ENCODE measurements at regions of chr19 and their contacts with region 1.

Region 1: GRCh38 chr19:54115109-54116063 is at the starts of genes PRPF31 and TFPT:
- DNase-seq: peak; percentile 98
- H3K4me3 Mint-ChIP-seq: peak within 1 kb of the TSS; percentile 85
- H3K27ac Mint-ChIP-seq: peak within 1 kb of the TSS; percentile 96
- H3K4me1 Mint-ChIP-seq: peaks cover 27% of the 10 kb centered on the region
- H3K27me3 Mint-ChIP-seq: no peaks in the 10 kb centered on the region
- total RNA-seq, gene PRPF31: 74.4 to 74.6 TPM
- total RNA-seq, gene TFPT: 27.1 to 31.6 TPM

Region 2: GRCh38 chr19:52189735-52190486 is 1925.5 kb before region 1 on chr19 and contains the start of gene PPP2R1A:
- CTCF ChIA-PET with region 1: no interaction called
- POLR2A ChIA-PET with region 1: no interaction called
- intact Hi-C with region 1: loop called (anchors 5 kb)
- DNase-seq: peak; percentile 98
- H3K4me3 Mint-ChIP-seq: peak within 1 kb of the TSS; percentile 96
- H3K27ac Mint-ChIP-seq: peak within 1 kb of the TSS; percentile 99
- H3K4me1 Mint-ChIP-seq: peaks cover 41% of the 10 kb centered on the region
- H3K27me3 Mint-ChIP-seq: no peaks in the 10 kb centered on the region
- total RNA-seq, gene PPP2R1A: 224 to 229 TPM

Region 3: DNA sequence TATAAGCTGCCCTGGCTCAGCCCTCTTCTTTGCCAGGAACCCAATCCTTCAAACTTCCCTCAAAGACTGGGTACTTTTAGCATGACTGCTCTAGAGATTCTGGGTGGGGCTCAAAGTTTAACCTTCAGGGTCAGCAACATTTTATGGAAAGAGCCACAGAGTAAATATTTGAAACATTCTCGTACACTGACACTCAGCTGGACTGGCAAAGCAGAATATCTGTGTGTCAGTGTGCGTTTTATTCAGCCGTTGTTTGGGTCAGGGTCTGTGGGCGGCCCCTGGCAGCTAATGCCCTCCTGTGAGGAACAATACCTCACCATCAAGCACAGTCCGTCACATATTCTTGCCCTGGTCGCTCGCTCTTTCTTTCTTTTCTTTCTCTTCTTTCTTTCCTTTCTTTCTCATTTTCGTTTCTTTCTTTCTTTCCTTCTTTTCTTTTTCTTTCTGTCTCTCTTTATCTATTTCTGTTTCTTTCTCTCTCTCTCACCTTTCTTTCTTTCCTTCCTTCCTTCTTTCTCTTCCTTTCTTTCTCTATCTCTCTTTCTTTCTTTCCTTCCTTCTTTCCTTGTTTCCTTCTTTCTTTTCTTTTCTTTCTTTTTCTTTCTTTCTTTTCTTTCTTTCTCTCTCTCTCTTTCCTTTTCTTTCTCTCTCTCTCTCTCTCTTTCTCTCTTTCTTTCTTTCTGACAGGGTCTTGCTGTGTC is 472.9 kb before region 1 on chr19:
- CTCF ChIA-PET with region 1: no interaction called
- POLR2A ChIA-PET with region 1: no interaction called
- intact Hi-C with region 1: no loop called
- DNase-seq: no peak
- H3K4me3 Mint-ChIP-seq: no peak overlapping the region
- H3K27ac Mint-ChIP-seq: no peak overlapping the region
- H3K4me1 Mint-ChIP-seq: no peaks in the 10 kb centered on the region
- H3K27me3 Mint-ChIP-seq: no peaks in the 10 kb centered on the region

Region 4: DNA sequence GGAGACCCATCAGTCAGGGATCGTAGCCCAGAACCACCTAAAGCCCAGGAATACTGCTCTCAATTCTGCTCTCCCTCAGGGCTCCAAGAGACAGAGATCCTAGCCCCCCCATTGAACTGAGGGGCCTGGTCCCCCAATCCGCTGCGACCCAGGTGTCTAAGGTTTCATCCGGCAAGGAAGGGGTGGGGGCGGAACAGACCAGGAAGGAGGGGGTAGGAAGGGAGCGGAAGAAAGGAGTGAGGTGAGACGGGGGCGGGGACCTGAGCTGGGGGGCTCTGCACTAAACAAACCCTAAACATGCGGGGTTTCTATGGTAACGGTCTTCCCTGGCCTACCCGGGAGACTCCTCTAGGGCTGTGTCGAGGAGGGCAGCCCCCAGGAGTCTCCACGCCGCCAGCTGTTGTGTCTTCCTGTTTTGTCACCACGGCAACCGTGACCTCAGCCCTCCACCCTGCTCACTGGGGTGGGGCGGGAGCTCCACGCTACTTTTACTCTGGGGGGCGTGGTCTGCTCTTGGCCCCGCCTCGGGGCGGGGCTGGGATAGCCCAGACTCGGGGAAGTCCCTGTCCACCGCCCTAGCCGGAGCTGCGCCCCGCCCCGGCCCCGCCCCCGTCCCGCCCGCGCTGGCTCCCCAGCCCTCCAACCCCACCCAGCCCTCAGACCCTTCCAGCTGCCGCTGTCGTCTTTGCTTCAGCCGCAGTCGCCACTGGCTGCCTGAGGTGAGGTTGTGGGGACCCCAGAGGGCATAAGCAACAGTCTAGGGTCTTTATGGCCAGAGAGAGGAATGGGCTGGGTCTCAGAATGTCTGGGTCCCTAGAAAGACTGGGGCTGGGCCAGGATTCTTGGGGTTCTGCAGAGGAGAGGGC is 247.9 kb before region 1 on chr19 and contains the start of gene MYADM:
- CTCF ChIA-PET with region 1: no interaction called
- POLR2A ChIA-PET with region 1: interaction called, 6 read pairs
- intact Hi-C with region 1: loop called (anchors 5 kb)
- DNase-seq: peak; percentile 99
- H3K4me3 Mint-ChIP-seq: peak within 1 kb of the TSS; percentile 93
- H3K27ac Mint-ChIP-seq: peak within 1 kb of the TSS; percentile 89
- H3K4me1 Mint-ChIP-seq: peaks cover 28% of the 10 kb centered on the region
- H3K27me3 Mint-ChIP-seq: no peaks in the 10 kb centered on the region
- total RNA-seq, gene MYADM: 40.3 to 45.5 TPM

Region 5: DNA sequence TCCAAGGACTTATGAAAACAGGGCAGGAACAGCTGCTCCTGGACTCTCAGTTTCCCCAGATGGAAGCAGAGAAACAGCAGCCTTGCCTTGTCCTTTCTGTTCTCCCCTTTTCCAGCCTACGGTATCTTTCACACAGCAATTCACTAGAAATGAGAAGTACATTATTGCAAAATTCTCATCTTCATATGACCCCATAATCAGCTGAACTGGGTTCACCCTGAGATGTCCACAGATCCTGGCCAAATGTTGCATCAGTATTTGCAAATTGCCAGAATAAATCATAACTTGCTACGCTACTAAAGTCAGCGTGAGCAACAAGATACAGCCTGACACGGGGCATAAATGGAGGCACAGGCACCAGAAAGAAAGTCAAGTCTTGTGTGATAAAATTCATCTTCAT is 67.8 kb before region 1 on chr19:
- CTCF ChIA-PET with region 1: no interaction called
- POLR2A ChIA-PET with region 1: no interaction called
- intact Hi-C with region 1: no loop called
- DNase-seq: no peak
- H3K4me3 Mint-ChIP-seq: no peak overlapping the region
- H3K27ac Mint-ChIP-seq: no peak overlapping the region
- H3K4me1 Mint-ChIP-seq: no peaks in the 10 kb centered on the region
- H3K27me3 Mint-ChIP-seq: peaks cover 18% of the 10 kb centered on the region

Region 6: DNA sequence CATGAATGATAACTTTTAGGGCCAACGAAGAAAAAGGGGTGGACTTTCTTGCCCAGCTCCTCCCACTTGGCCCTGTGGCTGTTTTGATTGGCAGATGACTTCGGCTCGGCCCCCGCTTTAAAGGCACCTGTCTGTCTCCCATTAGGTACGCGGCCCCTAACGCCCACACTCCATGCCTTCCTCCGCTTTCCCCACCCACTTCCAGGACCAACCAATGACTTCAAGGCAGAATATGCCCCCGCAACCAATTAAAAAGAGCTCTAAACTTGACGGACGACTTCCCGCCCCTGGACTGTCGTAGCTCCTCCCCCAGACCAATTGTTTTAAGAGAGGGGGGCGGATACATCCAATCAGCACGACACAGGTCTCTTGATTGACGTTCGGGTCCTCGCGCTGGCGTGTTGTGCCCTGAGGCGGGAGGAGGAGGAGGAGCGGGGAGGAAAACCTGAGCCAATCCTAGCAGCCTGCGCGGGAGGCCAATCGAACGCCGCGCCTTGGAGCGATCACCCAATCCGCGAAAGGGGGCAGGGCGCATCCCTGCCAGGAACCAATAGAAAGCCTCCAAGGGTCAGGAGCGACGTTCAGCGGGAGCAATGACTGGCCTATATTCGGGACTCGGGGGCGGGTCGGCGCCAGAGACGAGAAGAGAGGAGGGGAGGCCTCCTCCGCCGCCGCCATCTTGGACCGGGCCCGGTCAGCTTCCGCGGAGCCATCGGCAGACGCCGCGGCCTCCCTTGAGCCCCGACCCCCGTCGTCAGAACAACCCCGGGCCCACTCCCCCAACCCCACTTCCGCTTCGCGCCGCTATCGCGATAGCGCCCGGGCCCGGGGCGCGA is 21.9 kb after region 1 on chr19 and contains the start of gene CNOT3:
- CTCF ChIA-PET with region 1: interaction called, 5 read pairs
- POLR2A ChIA-PET with region 1: interaction called, 17 read pairs
- intact Hi-C with region 1: loop called (anchors 1 kb)
- DNase-seq: peak; percentile 100
- H3K4me3 Mint-ChIP-seq: peak within 1 kb of the TSS; percentile 86
- H3K27ac Mint-ChIP-seq: peak within 1 kb of the TSS; percentile 87
- H3K4me1 Mint-ChIP-seq: peaks cover 52% of the 10 kb centered on the region
- H3K27me3 Mint-ChIP-seq: no peaks in the 10 kb centered on the region
- total RNA-seq, gene CNOT3: 54.6 to 58.7 TPM

Region 7: GRCh38 chr19:54189735-54190502 is 74.5 kb after region 1 on chr19:
- CTCF ChIA-PET with region 1: no interaction called
- POLR2A ChIA-PET with region 1: interaction called, 9 read pairs
- intact Hi-C with region 1: loop called (anchors 1 kb)
- DNase-seq: peak; percentile 100
- H3K4me3 Mint-ChIP-seq: peak overlapping the region; percentile 85
- H3K27ac Mint-ChIP-seq: peak overlapping the region; percentile 99
- H3K4me1 Mint-ChIP-seq: peaks cover 31% of the 10 kb centered on the region
- H3K27me3 Mint-ChIP-seq: no peaks in the 10 kb centered on the region